Activated CD4-positive, alpha-beta memory T cell treated with anti-CD3 and anti-CD28 coated beads for 36 hours (primary cell): ENCODE measurements at regions of chr3 and their contacts with region 1.

Region 1: GRCh38 chr3:122533931-122534334 is 19.2 kb upstream of the KPNA1 start:
- DNase-seq: peak; percentile 65
- H3K4me3 Mint-ChIP-seq: no peak overlapping the region
- H3K27ac Mint-ChIP-seq: peak overlapping the region; percentile 35
- H3K4me1 Mint-ChIP-seq: peaks cover 37% of the 10 kb centered on the region
- H3K27me3 Mint-ChIP-seq: no peaks in the 10 kb centered on the region

Region 2: GRCh38 chr3:122427857-122428471 is 106.0 kb before region 1 on chr3:
- CTCF ChIA-PET with region 1: no interaction called
- POLR2A ChIA-PET with region 1: no interaction called
- intact Hi-C with region 1: loop called (anchors 1 kb)
- DNase-seq: no peak
- H3K4me3 Mint-ChIP-seq: no peak overlapping the region
- H3K27ac Mint-ChIP-seq: peak overlapping the region; percentile 74
- H3K4me1 Mint-ChIP-seq: peaks cover 23% of the 10 kb centered on the region
- H3K27me3 Mint-ChIP-seq: no peaks in the 10 kb centered on the region

Region 3: GRCh38 chr3:122458992-122459391 is 74.9 kb before region 1 on chr3:
- CTCF ChIA-PET with region 1: interaction called, 5 read pairs
- POLR2A ChIA-PET with region 1: no interaction called
- intact Hi-C with region 1: loop called (anchors 2 kb)
- DNase-seq: no peak
- H3K4me3 Mint-ChIP-seq: no peak overlapping the region
- H3K27ac Mint-ChIP-seq: no peak overlapping the region
- H3K4me1 Mint-ChIP-seq: peaks cover 6% of the 10 kb centered on the region
- H3K27me3 Mint-ChIP-seq: no peaks in the 10 kb centered on the region

Region 4: DNA sequence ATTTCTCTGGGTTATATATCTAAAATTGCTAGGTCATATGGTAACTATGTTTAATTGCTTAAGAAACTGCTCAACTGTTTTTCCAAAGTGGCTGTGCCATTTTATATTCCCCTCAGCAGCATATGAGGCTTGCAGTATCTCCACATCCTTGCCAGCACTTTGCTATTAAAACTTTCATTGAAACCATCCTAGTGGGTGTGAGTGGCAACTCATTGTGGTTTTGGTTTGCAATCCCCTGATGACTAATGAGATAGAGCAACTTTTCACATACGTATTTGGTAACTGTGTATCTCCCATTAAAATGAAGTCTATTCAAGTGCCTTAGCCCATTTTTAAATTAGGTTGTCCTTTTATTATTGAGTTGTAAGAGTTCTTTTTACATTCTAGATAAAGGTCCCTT is 36.5 kb before region 1 on chr3:
- CTCF ChIA-PET with region 1: no interaction called
- POLR2A ChIA-PET with region 1: interaction called, 3 read pairs
- intact Hi-C with region 1: loop called (anchors 1 kb)
- DNase-seq: peak; percentile 55
- H3K4me3 Mint-ChIP-seq: no peak overlapping the region
- H3K27ac Mint-ChIP-seq: no peak overlapping the region
- H3K4me1 Mint-ChIP-seq: peaks cover 35% of the 10 kb centered on the region
- H3K27me3 Mint-ChIP-seq: no peaks in the 10 kb centered on the region

Region 5: DNA sequence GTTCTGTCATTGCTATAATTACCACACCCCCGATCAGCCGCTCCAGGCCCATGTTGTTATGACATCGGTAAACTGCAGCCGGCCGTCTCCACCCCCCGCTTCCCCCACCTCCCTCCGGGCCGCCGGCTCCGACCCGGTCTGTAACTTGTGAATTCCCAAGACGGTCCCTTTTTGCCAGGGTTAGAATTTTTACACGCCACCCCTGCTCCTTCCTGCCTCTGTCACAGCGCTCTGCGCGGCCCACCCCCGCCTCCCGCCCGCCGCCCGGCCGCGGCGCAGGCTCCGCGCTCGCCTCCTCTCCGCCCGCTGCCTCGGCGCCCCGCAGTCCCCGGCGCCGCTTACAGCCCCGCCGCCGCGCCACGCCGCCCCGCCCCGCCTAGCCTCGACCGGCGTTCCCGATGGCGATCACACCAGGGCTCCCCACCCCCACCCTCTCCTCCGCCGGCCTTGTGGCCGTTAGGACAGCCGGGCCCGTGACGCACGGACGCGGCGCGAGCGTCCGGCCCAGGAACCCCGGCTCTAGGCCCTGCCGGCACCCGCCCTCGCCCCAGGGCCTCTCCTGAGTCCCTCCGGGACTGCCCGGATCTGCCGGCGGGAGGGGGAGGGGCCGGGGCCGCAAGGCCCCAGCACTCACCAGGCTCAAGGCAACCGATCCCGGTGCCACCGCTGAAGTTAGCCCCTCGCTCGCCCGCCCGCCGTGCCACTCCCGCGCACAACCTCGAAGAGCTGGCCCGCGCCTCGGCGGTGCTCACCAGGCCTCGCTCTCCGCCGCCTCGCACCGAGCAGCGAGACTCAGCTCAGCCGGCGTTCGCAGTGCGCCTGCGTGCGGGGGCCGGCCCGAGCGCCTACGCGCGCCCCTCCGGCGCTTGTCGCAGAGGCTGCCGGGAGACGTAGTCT is 19.6 kb before region 1 on chr3 and contains the start of gene KPNA1:
- CTCF ChIA-PET with region 1: interaction called, 4 read pairs
- POLR2A ChIA-PET with region 1: interaction called, 7 read pairs
- intact Hi-C with region 1: loop called (anchors 1 kb)
- DNase-seq: peak; percentile 91
- H3K4me3 Mint-ChIP-seq: peak within 1 kb of the TSS; percentile 77
- H3K27ac Mint-ChIP-seq: peak within 1 kb of the TSS; percentile 85
- H3K4me1 Mint-ChIP-seq: peaks cover 39% of the 10 kb centered on the region
- H3K27me3 Mint-ChIP-seq: no peaks in the 10 kb centered on the region
- total RNA-seq, gene KPNA1: 43.4 to 46.0 TPM

Region 6: DNA sequence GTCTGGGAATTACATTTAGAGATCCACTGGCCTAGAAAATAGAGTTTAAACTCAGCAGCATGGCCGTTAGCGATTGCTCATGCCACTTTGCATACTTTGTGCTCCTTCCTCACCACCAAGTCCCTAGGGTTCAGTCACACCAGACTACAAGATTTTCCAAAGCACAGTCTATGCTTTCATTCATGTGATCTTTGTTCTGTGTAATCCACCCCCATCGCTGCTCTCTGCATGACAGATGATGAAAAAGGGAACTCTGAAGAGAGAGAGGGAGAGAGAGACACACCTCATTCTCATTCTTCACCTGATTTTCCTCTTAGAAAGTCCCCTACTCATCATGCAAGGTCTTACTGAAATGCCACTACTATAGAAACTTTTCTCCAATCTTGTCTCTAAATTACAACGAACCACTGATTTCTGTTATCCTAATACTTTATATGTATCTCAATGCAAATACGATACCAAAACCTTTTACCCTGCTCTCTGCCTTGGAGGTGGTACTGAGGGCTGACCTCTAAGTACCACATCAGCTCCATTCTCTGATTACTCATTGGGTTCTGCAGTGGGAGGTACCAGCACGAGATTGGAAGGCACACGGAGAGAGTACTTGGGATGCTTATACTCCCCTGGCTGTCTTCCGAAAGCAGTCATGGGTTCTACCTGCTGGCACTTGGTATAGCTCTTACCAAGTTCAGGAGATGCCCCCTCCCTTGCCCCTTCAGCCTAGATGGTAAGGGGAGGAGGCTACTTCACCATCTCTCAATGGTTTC is 42.4 kb after region 1 on chr3:
- CTCF ChIA-PET with region 1: no interaction called
- POLR2A ChIA-PET with region 1: no interaction called
- intact Hi-C with region 1: loop called (anchors 2 kb)
- DNase-seq: peak; percentile 70
- H3K4me3 Mint-ChIP-seq: peak overlapping the region; percentile 35
- H3K27ac Mint-ChIP-seq: peak overlapping the region; percentile 82
- H3K4me1 Mint-ChIP-seq: peaks cover 61% of the 10 kb centered on the region
- H3K27me3 Mint-ChIP-seq: no peaks in the 10 kb centered on the region

Region 7: GRCh38 chr3:122609798-122610559 is 76.0 kb after region 1 on chr3:
- CTCF ChIA-PET with region 1: no interaction called
- POLR2A ChIA-PET with region 1: no interaction called
- intact Hi-C with region 1: loop called (anchors 1 kb)
- DNase-seq: peak; percentile 37
- H3K4me3 Mint-ChIP-seq: peak overlapping the region; percentile 17
- H3K27ac Mint-ChIP-seq: peak overlapping the region; percentile 87
- H3K4me1 Mint-ChIP-seq: peaks cover 21% of the 10 kb centered on the region
- H3K27me3 Mint-ChIP-seq: no peaks in the 10 kb centered on the region

Region 8: DNA sequence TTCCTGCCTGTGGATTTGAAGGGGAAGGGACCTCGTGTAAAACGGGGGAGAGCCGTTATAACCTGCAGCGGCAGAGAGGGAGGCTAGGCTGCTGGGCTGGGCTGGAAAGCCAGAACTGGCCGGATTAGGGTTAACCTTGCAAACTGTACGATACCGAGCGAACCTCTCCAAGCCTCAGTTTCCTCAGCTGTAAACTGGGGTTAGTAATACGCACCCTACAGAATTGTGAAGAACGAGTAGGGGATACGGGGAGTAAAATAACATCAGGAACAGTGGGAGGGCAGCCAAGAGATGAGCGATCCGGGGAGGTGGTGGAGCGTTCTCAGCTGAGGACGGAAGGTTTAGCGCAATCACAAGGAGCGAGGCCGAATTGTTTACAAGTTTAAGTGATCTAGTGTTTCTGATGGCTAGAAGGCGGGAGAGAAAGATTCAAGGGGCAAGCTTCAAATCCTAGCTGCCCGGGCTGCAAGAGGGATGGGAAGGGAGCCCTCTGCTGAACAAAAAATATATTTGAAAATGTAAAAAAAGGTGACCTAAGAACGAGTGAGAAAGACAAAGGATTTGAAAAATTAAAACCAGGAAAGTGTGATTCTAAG is 494.4 kb after region 1 on chr3:
- CTCF ChIA-PET with region 1: no interaction called
- POLR2A ChIA-PET with region 1: no interaction called
- intact Hi-C with region 1: no loop called
- DNase-seq: peak; percentile 28
- H3K4me3 Mint-ChIP-seq: peak overlapping the region; percentile 36
- H3K27ac Mint-ChIP-seq: no peak overlapping the region
- H3K4me1 Mint-ChIP-seq: peaks cover 12% of the 10 kb centered on the region
- H3K27me3 Mint-ChIP-seq: peaks cover 53% of the 10 kb centered on the region